ENCODE measurements at regions of chr7 and their contacts with region 1.

Region 1: DNA sequence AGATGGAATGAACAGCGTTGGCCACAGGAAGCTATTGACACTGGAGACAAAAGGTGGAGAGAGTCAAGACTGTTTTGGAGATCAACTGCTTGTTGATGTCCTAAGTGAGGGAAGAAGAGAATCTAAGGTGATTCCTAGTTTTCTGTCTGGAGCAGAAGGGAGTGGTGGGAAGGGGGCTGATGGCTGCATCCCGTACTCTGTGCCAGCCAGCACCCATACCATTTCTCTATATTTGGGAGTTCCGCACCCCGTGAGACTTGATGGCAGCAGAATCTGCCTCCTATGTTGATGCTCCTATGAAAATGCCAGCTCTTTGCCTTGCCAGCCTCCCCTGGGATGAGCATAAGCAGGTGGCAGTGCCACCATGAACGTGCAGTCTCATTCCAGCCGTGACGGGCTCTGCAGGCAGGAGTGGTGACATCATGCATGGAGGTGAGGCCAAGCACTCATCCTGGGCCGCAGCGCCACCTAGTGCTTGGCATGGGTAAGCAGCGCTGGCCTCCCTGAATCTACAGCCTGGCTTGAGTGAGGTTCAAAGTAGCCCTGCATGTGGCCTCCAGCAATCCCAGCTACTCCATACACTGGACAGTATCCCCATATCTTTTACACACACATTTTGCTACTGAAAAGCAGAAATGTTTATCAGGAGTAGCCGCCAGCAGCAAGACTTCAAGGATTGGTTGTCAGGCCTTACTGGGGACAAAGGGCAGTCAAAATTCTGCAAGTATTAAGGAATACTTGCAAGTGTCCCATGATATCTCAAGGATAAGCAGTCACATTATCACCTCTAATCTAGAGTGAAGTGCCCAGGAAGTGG is 43.0 kb downstream of the PODXL start:
- DNase-seq: peak; percentile 65 to 89
- H3K4me3 ChIP-seq: no peak overlapping the region
- H3K4me1 ChIP-seq: peaks cover 9% of the 10 kb centered on the region
- H3K27me3 ChIP-seq: no peaks in the 10 kb centered on the region

Region 2: DNA sequence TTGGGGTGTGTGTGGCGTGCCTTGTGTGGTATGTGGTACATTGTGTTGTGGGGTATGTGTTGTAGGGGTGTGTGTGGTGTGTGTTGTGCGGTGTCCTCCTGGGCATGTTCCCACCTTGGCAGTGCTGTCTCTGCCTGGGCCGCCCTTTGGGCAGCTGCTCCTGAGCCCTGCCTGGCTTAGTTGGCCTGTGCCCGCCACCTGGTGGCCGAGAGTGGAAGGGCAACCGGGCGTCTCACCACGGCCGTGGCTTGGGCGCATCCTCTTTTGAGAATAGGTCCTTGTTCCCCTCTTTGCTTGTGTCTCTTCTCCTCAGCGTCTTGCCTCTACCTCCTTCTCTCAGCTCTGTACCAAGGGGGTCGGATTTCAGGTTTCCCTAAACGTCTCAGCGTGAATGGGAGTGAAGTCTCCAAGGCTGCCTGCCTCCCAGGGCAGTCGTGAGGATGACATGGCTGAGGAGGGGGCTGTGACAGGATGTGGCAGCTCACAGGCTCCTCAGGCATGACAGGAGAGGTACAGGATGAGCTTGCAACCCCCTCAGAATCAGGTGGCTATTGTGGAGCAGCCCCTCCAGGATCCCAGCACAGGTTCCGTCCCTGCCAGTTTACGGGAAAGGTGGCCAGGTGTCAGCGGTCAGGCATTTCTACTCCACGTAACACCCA is 141.3 kb after region 1 on chr7:
- in situ Hi-C with region 1: loop called (anchors 5 kb)
- DNase-seq: peak; percentile 58 to 94
- H3K4me3 ChIP-seq: no peak overlapping the region
- H3K4me1 ChIP-seq: no peaks in the 10 kb centered on the region
- H3K27me3 ChIP-seq: no peaks in the 10 kb centered on the region

Measured in HAP-1 (cell line).